HEK293 (cell line): ENCODE measurements at regions of chr1 and their contacts with region 1.

Region 1: GRCh38 chr1:31789259-31790065 is 25.3 kb upstream of the ADGRB2 start:
- H3K4me3 ChIP-seq: peak overlapping the region; percentile 64
- H3K27ac ChIP-seq: no peak overlapping the region
- H3K4me1 ChIP-seq: no peaks in the 10 kb centered on the region
- CTCF ChIP-seq: peak; percentile 98

Region 2: GRCh38 chr1:31564134-31564989 is 225.1 kb before region 1 on chr1:
- CTCF ChIA-PET with region 1: interaction called, 16 read pairs
- POLR2A ChIA-PET with region 1: no interaction called
- H3K4me3 ChIP-seq: no peak overlapping the region
- H3K27ac ChIP-seq: no peak overlapping the region
- H3K4me1 ChIP-seq: no peaks in the 10 kb centered on the region
- CTCF ChIP-seq: no peak

Region 3: DNA sequence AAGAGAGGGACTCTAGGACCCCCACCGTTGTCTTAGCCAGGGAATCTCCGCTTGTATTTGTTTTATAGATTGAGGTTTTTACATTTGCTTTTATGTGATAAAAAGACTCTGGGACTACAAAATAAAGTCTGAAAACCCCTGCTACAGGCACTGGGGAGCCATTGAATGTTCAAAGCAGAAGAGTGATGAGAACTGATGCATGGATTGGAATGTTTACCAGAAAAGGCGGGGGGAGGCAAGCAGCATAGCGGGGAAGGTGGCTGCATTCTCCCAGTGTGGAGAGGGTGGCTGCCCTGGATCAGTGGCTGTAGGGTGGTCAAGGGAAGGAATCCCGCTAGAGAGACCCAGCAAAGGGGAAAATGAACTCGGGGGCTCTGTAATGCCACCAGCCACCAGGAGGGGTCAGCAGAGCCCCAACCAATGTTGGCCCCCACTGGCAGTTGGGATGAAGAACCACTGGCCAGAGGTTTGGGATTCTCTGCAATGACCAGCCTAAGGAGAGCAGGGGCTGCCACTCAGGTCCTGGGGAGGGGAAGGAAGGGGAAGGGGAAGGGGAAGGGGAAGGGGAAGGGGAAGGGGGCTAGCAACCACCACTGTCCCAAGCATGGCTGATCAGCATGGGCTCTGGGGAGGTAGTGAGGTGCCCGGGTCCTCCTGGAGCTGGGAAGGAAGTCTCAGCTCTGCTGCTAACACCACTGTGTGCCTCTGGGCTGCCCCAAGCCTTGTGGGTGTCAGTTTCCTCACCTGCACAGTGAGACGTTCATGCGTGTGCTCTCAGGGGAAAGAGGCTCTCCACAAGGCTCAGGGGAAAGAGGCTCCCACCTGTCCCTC is 125.6 kb before region 1 on chr1:
- CTCF ChIA-PET with region 1: interaction called, 99 read pairs
- POLR2A ChIA-PET with region 1: interaction called, 12 read pairs
- H3K4me3 ChIP-seq: no peak overlapping the region
- H3K27ac ChIP-seq: no peak overlapping the region
- H3K4me1 ChIP-seq: no peaks in the 10 kb centered on the region
- CTCF ChIP-seq: peak; percentile 82

Region 4: GRCh38 chr1:31762726-31763670 is 26.5 kb before region 1 on chr1:
- CTCF ChIA-PET with region 1: interaction called, 51 read pairs
- POLR2A ChIA-PET with region 1: interaction called, 7 read pairs
- H3K4me3 ChIP-seq: peak overlapping the region; percentile 50
- H3K27ac ChIP-seq: peak overlapping the region; percentile 39; the same call in 1 of the 2 replicates
- H3K4me1 ChIP-seq: no peaks in the 10 kb centered on the region; the same call in 1 of the 2 replicates
- CTCF ChIP-seq: peak; percentile 68

Region 5: GRCh38 chr1:31805318-31805717 is 15.9 kb after region 1 on chr1:
- CTCF ChIA-PET with region 1: interaction called, 14 read pairs
- POLR2A ChIA-PET with region 1: no interaction called
- H3K4me3 ChIP-seq: no peak overlapping the region
- H3K27ac ChIP-seq: no peak overlapping the region
- H3K4me1 ChIP-seq: no peaks in the 10 kb centered on the region
- CTCF ChIP-seq: no peak